ENCODE measurements at regions of chr3 and their contacts with region 1.

Region 1: GRCh38 chr3:143165211-143165610 is 45.6 kb downstream of the CHST2 start:
- DNase-seq: no peak
- H3K4me3 Mint-ChIP-seq: no peak overlapping the region
- H3K27ac Mint-ChIP-seq: peak overlapping the region; percentile 88
- H3K4me1 Mint-ChIP-seq: peaks cover 73% of the 10 kb centered on the region
- H3K27me3 Mint-ChIP-seq: no peaks in the 10 kb centered on the region

Region 2: DNA sequence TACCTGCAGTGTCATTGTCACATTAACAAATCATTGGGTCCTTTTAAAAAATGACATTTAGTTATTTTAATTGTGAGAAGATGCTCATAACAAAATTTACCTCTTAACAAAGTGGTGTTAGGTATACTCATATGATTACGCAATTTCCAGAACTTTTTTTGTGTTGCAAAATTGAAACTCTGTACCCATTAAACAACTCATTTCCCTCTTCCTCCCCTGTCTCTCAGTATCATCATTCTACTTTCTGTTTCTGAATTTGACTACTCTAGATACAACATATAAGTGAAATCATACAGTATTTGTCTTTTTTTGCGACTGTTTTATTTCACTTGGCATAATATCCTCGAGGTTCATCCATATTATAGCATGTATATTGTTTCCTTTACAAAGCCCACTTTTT is 104.3 kb before region 1 on chr3:
- CTCF ChIA-PET with region 1: interaction called, 3 read pairs
- intact Hi-C with region 1: loop called (anchors 1 kb)
- DNase-seq: no peak
- H3K4me3 Mint-ChIP-seq: no peak overlapping the region
- H3K27ac Mint-ChIP-seq: no peak overlapping the region
- H3K4me1 Mint-ChIP-seq: peaks cover 27% of the 10 kb centered on the region
- H3K27me3 Mint-ChIP-seq: no peaks in the 10 kb centered on the region

Region 3: DNA sequence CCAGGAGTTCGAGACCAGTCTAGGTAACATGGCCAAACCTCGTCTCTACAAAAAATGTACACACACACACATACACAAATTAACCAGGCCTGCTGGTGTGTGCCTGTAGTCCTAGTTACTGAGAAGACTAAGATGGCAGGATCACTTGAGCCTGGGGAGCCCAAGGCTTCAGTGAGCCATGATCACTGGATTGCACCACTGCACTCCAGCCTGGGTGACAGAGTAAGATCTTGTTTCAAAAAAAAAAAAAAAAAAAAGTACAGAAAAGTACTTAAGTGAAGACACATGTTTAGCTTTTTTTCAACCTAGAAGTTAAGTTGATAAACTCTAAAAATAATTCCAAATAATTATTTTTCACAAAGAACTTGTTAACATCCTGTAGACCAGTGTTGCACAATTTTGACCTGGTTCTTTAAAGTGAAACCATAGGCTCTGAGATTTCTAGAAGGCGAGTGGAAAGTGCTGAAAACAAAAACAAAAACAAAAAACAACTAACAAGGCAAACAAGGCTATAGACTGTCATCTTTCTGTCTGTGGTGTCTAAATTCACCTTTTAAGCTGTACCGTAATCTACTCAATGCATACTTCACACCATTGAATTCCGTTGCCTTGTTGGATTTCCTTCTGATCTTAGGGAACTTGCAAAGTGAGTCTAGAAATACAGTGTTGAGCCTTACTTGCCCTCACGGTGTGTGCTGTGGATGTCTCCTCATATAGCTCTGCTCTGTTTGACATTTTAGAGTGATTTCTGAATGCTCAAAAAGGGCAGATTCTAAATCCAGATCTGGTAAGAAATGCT is 17.9 kb after region 1 on chr3:
- CTCF ChIA-PET with region 1: interaction called, 3 read pairs
- intact Hi-C with region 1: loop called (anchors 2 kb)
- DNase-seq: no peak
- H3K4me3 Mint-ChIP-seq: no peak overlapping the region
- H3K27ac Mint-ChIP-seq: no peak overlapping the region
- H3K4me1 Mint-ChIP-seq: peaks cover 19% of the 10 kb centered on the region
- H3K27me3 Mint-ChIP-seq: no peaks in the 10 kb centered on the region

Region 4: GRCh38 chr3:143443851-143444331 is 278.7 kb after region 1 on chr3:
- CTCF ChIA-PET with region 1: no interaction called
- intact Hi-C with region 1: loop called (anchors 1 kb)
- DNase-seq: peak; percentile 60
- H3K4me3 Mint-ChIP-seq: no peak overlapping the region
- H3K27ac Mint-ChIP-seq: peak overlapping the region; percentile 10
- H3K4me1 Mint-ChIP-seq: peaks cover 32% of the 10 kb centered on the region
- H3K27me3 Mint-ChIP-seq: no peaks in the 10 kb centered on the region

Region 5: DNA sequence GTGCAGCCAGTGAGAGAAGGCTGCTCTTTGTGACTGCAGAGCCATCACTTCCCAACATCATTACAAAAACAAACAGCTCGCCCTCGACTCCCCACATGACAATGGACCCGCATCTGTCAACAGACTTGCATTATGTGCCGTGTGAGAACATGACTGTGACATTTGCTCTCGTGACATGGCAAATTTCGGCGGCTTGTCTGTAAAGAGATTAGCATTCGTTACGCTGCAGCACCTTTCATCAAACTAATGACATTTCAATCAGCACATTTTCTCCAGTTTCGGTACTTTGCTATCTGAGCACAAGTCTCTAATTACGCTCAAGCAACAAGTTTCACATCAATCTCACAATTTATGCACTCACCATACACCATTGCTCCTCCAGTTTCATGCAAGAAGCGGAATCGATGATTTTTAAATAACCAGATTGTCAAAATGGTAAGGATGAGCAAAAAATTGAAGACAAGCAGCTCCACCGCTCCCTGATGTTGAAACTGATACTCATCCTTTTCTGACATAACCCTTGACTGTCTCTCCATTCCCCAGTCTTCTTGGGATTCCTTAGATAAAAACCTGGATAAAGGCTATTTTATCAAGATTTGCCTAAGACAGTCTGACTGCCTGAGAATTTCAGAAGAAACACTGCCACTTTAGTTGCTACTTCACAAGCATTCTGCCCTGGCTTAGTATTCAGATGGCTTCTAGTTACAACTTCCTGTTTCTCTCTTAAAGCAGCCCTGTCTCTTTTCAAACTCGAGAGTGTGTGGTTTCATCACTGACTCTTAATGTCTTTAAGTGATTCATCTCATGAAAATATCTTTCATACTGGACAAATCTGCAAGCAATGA is 682.8 kb after region 1 on chr3 and contains the start of gene SLC9A9:
- CTCF ChIA-PET with region 1: no interaction called
- intact Hi-C with region 1: loop called (anchors 1 kb)
- DNase-seq: peak; percentile 61
- H3K4me3 Mint-ChIP-seq: peak within 1 kb of the TSS; percentile 87
- H3K27ac Mint-ChIP-seq: peak within 1 kb of the TSS; percentile 80
- H3K4me1 Mint-ChIP-seq: peaks cover 49% of the 10 kb centered on the region
- H3K27me3 Mint-ChIP-seq: no peaks in the 10 kb centered on the region
- total RNA-seq, gene SLC9A9: 0.33 to 0.49 TPM

Measured in activated naive CD4-positive, alpha-beta T cell treated with anti-CD3 and anti-CD28 coated beads for 36 hours (primary cell).